AG04450 (cell line): ENCODE measurements at regions of chr1 and their contacts with region 1.

Region 1: DNA sequence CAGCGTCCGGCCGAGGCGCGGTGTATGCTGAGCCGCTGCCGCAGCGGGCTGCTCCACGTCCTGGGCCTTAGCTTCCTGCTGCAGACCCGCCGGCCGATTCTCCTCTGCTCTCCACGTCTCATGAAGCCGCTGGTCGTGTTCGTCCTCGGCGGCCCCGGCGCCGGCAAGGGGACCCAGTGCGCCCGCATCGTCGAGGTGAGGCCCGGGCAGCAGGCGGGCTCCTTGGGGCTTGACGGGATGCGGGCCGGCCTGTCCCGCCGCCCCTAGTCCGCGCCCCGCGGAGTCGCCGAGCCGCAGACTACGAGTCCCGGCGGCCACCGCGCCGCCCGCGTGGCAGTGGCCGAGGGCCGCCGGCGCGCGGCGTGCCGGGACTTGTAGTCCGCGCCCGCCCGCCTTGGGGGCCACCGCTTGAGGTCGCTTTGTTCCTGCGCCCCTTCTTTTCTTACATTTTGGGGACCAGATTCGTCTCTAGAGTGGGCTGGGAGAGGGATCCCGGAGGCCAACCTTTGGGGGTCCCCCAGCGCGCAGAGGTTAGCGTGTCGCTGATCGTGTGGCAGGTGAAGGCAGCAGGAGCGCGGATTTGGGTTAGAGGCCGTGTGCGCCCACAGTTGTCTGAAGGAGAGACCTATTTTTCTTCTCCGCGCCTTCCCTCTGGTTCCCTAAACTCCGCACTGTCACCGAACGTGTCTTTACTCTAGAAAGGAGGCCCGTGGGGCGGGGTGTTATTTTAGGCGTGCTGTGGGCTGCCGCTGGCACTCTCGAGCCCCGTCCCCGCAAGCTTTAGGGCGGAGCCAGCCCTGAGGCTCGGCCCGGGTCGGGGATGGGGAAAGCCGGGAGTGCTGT is 553 bp downstream of the CMPK1 start:
- DNase-seq: no peak
- H3K4me3 ChIP-seq: peak overlapping the region; percentile 93
- H3K27ac ChIP-seq: peak overlapping the region; percentile 90
- H3K27me3 ChIP-seq: no peaks in the 10 kb centered on the region
- CTCF ChIP-seq: peak; percentile 31

Region 2: DNA sequence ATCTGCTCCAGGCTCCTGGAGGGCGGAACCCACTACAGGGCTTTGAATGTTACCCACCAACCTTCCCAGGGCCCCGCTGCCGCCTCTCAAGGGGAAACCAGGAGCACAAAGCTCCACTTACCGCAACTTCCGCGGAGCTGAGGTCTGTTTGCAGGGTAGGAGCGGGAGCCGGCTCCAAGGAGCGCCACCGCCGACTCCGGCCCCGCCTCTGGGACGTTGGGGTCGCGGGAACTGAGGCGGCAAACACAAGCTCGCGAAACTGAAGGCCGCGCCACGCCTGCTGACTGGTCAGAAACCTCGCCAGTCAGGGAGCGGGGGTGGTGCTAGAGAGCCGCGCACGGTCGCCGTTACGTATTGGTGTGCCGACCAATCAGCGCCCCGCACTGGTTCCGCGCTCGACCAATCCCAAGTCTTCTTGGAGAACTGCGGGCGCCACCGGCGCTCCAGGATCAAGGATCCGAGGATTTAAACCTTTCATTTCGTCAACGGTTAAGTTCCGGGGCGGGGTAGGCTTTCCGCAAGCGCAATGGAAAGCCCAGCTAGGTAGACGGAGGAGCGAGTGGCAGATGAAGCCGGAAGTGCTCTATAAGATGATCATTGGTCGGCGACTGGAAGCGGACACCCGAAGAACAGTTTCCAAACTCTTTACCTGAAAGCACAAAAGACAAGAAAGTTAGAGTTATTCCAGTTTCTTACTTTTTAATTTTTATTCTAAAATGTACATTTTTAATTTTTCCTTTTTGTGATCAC is 20.1 kb before region 1 on chr1 and contains the start of gene STIL:
- CTCF ChIA-PET with region 1: interaction called, 3 read pairs
- POLR2A ChIA-PET with region 1: interaction called, 23 read pairs
- DNase-seq: peak; percentile 98
- H3K4me3 ChIP-seq: peak within 1 kb of the TSS; percentile 87
- H3K27ac ChIP-seq: peak within 1 kb of the TSS; percentile 87
- H3K27me3 ChIP-seq: no peaks in the 10 kb centered on the region
- CTCF ChIP-seq: no peak
- polyA plus RNA-seq, gene STIL: 3.5 and 6.4 TPM in 2 replicates